ENCODE measurements at regions of chr14 and their contacts with region 1.

Region 1: GRCh38 chr14:63624203-63624602 is 17.5 kb downstream of the WDR89 start:
- DNase-seq: no peak
- H3K4me3 ChIP-seq: no peak overlapping the region
- H3K4me3 Mint-ChIP-seq: no peak overlapping the region
- H3K27ac ChIP-seq: no peak overlapping the region
- H3K27ac Mint-ChIP-seq: peak overlapping the region in 2 of 7 donors; percentile 37 to 81
- H3K4me1 ChIP-seq: no peaks in the 10 kb centered on the region
- H3K4me1 Mint-ChIP-seq: no peaks in the 10 kb centered on the region
- H3K27me3 ChIP-seq: no peaks in the 10 kb centered on the region
- H3K27me3 Mint-ChIP-seq: no peaks in the 10 kb centered on the region
- CTCF ChIP-seq: no peak

Region 2: GRCh38 chr14:63745858-63746425 is 121.7 kb after region 1 on chr14:
- intact Hi-C with region 1: no loop called
- DNase-seq: peak in 2 of 3 donors; percentile 15 to 37
- H3K4me3 ChIP-seq: no peak overlapping the region
- H3K4me3 Mint-ChIP-seq: peak overlapping the region in 1 of 2 donors; percentile 61
- H3K27ac ChIP-seq: no peak overlapping the region
- H3K27ac Mint-ChIP-seq: peak overlapping the region in 5 of 7 donors; percentile 11 to 73 (median 68)
- H3K4me1 ChIP-seq: peaks cover 0 to 10% of the 10 kb centered on the region in 2 donors
- H3K4me1 Mint-ChIP-seq: peaks cover 17% of the 10 kb centered on the region
- H3K27me3 ChIP-seq: no peaks in the 10 kb centered on the region
- H3K27me3 Mint-ChIP-seq: peaks cover 2 to 9% (median 5%) of the 10 kb centered on the region in 3 donors
- CTCF ChIP-seq: no peak

Region 3: GRCh38 chr14:63760014-63760413 is 135.8 kb after region 1 on chr14:
- intact Hi-C with region 1: loop called in 1 of 2 experiments (anchors 10 kb)
- DNase-seq: no peak
- H3K4me3 ChIP-seq: no peak overlapping the region
- H3K4me3 Mint-ChIP-seq: no peak overlapping the region
- H3K27ac ChIP-seq: no peak overlapping the region
- H3K27ac Mint-ChIP-seq: peak overlapping the region in 3 of 7 donors; percentile 24 to 53 (median 42)
- H3K4me1 ChIP-seq: peaks cover 0 to 5% of the 10 kb centered on the region in 2 donors
- H3K4me1 Mint-ChIP-seq: peaks cover 19% of the 10 kb centered on the region
- H3K27me3 ChIP-seq: no peaks in the 10 kb centered on the region
- H3K27me3 Mint-ChIP-seq: peaks cover 0 to 8% (median 1%) of the 10 kb centered on the region in 3 donors
- CTCF ChIP-seq: no peak

Measured in CD14-positive monocyte (primary cell).